Mucosa of descending colon (tissue), 3 donors: ENCODE measurements at regions of chr7 and their contacts with region 1.

Region 1: GRCh38 chr7:149670288-149670687 is 103.1 kb downstream of the ZNF467 start:
- DNase-seq: peak in 1 of 3 donors; percentile 5
- ATAC-seq: no peak
- H3K4me3 ChIP-seq: no peak overlapping the region
- H3K4me1 ChIP-seq: no peaks in the 10 kb centered on the region
- CTCF ChIP-seq: no peak

Region 2: GRCh38 chr7:149440222-149440621 is 230.1 kb before region 1 on chr7:
- intact Hi-C with region 1: no loop called
- DNase-seq: no peak
- ATAC-seq: no peak
- H3K4me3 ChIP-seq: no peak overlapping the region
- H3K4me1 ChIP-seq: no peaks in the 10 kb centered on the region
- CTCF ChIP-seq: no peak

Region 3: GRCh38 chr7:149729983-149730801 is 59.9 kb after region 1 on chr7:
- intact Hi-C with region 1: loop called in 1 of 2 experiments (anchors 10 kb)
- DNase-seq: no peak
- ATAC-seq: no peak
- H3K4me3 ChIP-seq: no peak overlapping the region
- H3K4me1 ChIP-seq: no peaks in the 10 kb centered on the region
- CTCF ChIP-seq: no peak